Mammary epithelial cell (primary cell): ENCODE measurements at regions of chr9 and their contacts with region 1.

Region 1: DNA sequence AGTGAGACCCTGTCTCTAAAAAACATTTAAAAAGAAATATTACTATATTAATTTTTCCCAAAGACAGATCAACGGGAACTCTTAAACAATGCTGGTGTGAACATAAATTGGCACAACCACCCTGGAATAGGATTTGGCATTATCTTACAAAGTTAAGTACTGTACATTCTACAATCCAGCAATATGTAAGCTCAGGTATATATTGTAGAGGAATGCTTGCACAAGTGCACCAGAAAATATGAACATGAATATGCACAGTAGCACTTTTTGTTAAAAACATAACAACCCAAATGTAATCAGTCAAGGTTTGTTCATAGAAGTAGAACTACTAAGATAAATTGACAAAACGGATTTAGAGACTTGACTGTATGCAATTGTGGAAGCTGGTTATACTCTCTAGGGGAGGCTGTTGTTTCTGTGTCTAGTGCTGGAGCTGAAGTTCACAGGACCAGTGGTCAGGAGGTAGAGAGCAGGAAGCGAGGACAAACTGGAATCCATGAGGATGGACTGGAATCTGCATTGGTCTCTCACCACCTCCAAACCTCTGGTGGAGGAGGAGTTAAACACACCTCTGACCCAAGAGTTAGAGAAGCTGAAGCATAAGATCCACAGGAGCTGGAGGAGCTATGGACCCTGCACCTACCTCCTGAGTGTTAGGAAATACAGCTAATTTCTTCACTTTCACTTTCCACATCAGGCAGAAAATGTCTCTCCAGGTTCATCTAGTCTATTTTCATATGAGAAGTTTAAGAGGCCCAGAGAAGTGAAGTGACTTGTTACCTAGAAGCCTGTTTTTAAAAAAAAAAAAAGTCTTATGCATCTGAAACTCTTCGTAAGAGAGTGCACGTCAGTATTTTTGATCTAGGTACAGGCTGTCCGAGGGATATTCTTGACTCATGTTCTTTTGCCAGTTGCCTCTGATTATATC is 20.3 kb upstream of the RIC1 start:
- DNase-seq: peak; percentile 46
- H3K4me3 ChIP-seq: peak overlapping the region; percentile 18 to 36 (median 25)
- H3K27ac ChIP-seq: no peak overlapping the region
- H3K4me1 ChIP-seq: peaks cover 3% of the 10 kb centered on the region
- H3K27me3 ChIP-seq: no peaks in the 10 kb centered on the region
- CTCF ChIP-seq: no peak

Region 2: DNA sequence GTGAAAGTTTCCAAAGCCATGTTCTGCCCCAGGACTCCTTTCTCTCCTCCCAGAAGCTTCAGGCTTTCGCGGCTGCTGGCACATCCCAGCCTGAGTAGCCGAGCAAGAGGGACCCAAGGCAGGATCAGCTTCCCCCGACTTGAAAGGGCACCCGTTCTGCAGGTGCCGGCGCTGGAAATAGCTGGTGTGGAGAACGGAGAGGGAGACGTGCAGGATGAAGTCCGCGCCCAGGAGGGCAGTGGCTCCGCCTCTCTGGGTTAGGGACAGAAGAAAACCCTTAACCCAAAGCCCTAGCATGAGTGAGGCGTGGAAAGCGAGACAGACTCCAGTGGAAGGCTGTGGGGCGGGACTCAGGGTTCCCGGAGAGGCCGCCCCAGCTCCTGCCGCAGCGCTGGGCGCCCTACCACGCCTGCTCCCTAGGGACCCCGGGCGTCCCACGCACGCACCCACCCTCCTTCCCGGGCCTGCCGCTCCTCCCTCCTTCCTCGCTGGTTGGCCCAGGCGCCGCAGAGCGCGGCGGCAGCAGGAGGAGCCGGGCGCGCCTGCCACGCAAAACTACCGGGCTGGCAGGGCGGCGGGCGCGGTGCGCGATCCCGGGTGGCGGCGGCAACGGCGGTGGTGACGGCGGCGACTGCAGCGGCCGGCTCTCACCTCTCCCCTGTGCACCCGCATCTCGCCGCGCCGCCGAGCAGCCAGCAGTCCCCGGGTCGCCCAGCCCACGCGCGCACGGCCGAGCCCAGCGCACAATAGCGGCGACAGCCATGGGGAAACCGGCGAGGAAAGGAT is 1118.5 kb before region 1 on chr9 and contains the start of gene SLC1A1:
- CTCF ChIA-PET with region 1: no interaction called
- dilution Hi-C with region 1: no loop called
- in situ Hi-C with region 1: no loop called
- intact Hi-C with region 1: loop called (anchors 5 kb)
- DNase-seq: peak; percentile 54
- H3K4me3 ChIP-seq: peak within 1 kb of the TSS; percentile 58 to 71 (median 60)
- H3K27ac ChIP-seq: no peak within 1 kb of the TSS
- H3K4me1 ChIP-seq: peaks cover 12% of the 10 kb centered on the region
- H3K27me3 ChIP-seq: peaks cover 6% of the 10 kb centered on the region
- CTCF ChIP-seq: no peak
- total RNA-seq, gene SLC1A1: 1.1 to 5.3 TPM

Region 3: GRCh38 chr9:5195453-5195852 is 413.1 kb before region 1 on chr9:
- CTCF ChIA-PET with region 1: no interaction called
- dilution Hi-C with region 1: no loop called
- in situ Hi-C with region 1: loop called in 1 of 2 experiments (anchors 10 kb)
- intact Hi-C with region 1: no loop called
- DNase-seq: peak; percentile 28
- H3K4me3 ChIP-seq: no peak overlapping the region
- H3K27ac ChIP-seq: no peak overlapping the region
- H3K4me1 ChIP-seq: no peaks in the 10 kb centered on the region
- H3K27me3 ChIP-seq: peaks cover 2% of the 10 kb centered on the region
- CTCF ChIP-seq: no peak